Prostate gland (tissue), 2 donors: ENCODE measurements at regions of chr2 and their contacts with region 1.

Region 1: GRCh38 chr2:47906157-47907038 is at the start of gene FBXO11:
- DNase-seq: peak; percentile 95
- H3K4me3 ChIP-seq: peak within 1 kb of the TSS; percentile 69 to 82
- H3K27ac ChIP-seq: peak within 1 kb of the TSS; percentile 98 to 99
- H3K4me1 ChIP-seq: no peaks in the 10 kb centered on the region
- H3K27me3 ChIP-seq: no peaks in the 10 kb centered on the region
- CTCF ChIP-seq: peak in 2 of 4 experiments; percentile 21 to 60
- POLR2A ChIP-seq: peak; percentile 85
- total RNA-seq, gene FBXO11: 48.4 to 54.2 TPM

Region 2: DNA sequence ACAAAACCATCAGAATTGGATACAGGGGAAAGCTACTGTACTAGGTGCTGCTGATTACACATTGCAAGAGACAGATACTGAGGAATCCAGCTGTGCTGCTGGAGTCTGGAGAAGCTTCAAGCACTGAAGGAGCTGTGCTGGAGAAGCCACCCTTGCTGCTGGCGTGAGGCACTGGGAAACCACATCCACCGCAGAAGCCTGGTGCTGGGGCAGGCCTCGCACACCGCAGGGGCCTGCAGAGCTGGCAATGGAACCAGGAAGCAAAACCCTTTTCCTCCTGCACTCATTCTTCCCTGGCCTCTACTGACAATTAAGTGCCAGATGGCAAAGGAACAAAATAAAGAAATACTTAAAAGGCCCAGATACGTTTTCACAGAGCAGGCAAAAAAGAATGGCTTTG is 217.8 kb before region 1 on chr2:
- intact Hi-C with region 1: no loop called
- DNase-seq: no peak
- H3K4me3 ChIP-seq: no peak overlapping the region
- H3K27ac ChIP-seq: no peak overlapping the region
- H3K4me1 ChIP-seq: no peaks in the 10 kb centered on the region
- H3K27me3 ChIP-seq: no peaks in the 10 kb centered on the region
- CTCF ChIP-seq: no peak
- POLR2A ChIP-seq: no peak

Region 3: DNA sequence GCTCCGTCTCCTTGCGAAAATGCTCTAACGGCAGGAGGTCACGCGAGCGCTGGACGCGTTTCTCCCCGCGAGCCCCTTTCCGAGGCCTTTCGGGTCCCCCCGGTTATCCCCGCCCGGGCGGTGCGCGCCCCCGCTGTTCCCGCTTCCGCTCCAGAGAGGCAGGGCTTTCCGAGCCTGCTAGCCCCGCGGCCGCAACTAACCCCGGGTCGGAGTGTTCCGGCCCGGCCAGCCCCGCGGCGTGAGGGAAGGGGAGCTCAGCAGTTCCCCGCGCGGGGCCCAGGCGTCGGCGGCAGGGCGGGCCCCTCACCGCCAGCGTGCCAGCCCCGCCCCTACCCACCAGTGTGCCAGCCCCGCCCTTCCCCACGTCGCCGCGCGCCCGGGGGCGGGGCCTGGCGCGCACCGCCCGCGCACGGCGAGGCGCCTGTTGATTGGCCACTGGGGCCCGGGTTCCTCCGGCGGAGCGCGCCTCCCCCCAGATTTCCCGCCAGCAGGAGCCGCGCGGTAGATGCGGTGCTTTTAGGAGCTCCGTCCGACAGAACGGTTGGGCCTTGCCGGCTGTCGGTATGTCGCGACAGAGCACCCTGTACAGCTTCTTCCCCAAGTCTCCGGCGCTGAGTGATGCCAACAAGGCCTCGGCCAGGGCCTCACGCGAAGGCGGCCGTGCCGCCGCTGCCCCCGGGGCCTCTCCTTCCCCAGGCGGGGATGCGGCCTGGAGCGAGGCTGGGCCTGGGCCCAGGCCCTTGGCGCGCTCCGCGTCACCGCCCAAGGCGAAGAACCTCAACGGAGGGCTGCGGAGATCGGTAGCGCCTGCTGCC is 123.5 kb before region 1 on chr2 and contains the start of gene MSH6:
- intact Hi-C with region 1: loop called (anchors 2 kb)
- DNase-seq: peak; percentile 89
- H3K4me3 ChIP-seq: peak within 1 kb of the TSS; percentile 83 to 95
- H3K27ac ChIP-seq: peak within 1 kb of the TSS; percentile 94
- H3K4me1 ChIP-seq: no peaks in the 10 kb centered on the region
- H3K27me3 ChIP-seq: no peaks in the 10 kb centered on the region
- CTCF ChIP-seq: peak in 1 of 4 experiments; percentile 42
- POLR2A ChIP-seq: peak; percentile 91
- total RNA-seq, gene MSH6: 51.6 to 71.7 TPM

Region 4: DNA sequence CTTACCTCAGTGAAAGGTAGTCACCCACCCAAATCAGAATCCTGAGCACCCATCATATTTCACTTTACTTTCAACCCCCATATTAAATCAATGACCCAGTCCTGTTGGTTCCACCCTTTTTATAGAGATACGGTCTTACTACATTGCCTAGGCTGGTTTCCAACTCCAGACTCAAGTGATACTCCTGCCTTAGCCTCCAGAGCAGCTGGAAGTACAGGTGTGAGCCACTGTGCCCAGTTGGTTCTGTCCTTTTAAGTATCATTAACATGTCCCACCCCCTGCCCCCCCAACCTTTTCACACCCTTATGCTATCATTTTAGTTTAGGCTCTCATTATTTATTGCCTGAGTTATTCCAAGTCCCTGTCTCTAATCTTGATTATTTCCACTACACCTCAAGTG is 94.7 kb before region 1 on chr2:
- intact Hi-C with region 1: no loop called
- DNase-seq: no peak
- H3K4me3 ChIP-seq: no peak overlapping the region
- H3K27ac ChIP-seq: no peak overlapping the region
- H3K4me1 ChIP-seq: no peaks in the 10 kb centered on the region
- H3K27me3 ChIP-seq: no peaks in the 10 kb centered on the region
- CTCF ChIP-seq: no peak
- POLR2A ChIP-seq: no peak

Region 5: GRCh38 chr2:47935071-47935470 is 28.7 kb after region 1 on chr2:
- intact Hi-C with region 1: no loop called
- DNase-seq: no peak
- H3K4me3 ChIP-seq: no peak overlapping the region
- H3K27ac ChIP-seq: no peak overlapping the region
- H3K4me1 ChIP-seq: no peaks in the 10 kb centered on the region
- H3K27me3 ChIP-seq: no peaks in the 10 kb centered on the region
- CTCF ChIP-seq: no peak
- POLR2A ChIP-seq: no peak

Region 6: DNA sequence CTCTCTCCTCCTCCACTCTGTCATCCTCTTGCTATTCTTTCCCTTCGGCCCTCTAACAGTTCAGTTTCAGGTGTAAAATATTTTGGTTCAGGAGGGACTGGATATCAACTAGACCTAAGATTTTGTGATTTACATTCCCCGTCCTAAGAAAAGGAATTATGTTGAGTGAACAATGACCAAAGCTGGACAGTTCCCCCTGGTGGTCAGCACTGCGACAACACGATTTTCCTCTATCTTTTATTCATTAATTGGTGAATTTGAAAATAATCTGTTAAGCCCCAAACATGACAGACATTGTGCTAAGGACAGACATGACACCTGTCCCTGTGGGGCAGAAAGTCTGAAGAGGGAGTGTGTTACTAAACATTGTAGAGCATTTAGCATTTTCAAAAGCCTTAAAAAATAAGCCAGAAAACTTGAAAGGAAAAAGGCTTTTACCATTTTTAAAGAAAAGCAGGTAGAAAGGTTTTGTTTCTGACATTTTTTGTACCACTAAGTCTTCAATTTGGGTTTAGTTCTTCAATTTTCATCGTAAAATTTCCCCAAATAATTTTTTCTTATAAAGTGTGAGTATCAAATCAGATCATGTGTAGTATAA is 682.9 kb after region 1 on chr2:
- intact Hi-C with region 1: loop called (anchors 5 kb)
- DNase-seq: no peak
- H3K4me3 ChIP-seq: no peak overlapping the region
- H3K27ac ChIP-seq: no peak overlapping the region
- H3K4me1 ChIP-seq: no peaks in the 10 kb centered on the region
- H3K27me3 ChIP-seq: no peaks in the 10 kb centered on the region
- CTCF ChIP-seq: peak; percentile 59 to 77 (median 68)
- POLR2A ChIP-seq: no peak